ENCODE measurements at regions of chr14 and their contacts with region 1.

Region 1: DNA sequence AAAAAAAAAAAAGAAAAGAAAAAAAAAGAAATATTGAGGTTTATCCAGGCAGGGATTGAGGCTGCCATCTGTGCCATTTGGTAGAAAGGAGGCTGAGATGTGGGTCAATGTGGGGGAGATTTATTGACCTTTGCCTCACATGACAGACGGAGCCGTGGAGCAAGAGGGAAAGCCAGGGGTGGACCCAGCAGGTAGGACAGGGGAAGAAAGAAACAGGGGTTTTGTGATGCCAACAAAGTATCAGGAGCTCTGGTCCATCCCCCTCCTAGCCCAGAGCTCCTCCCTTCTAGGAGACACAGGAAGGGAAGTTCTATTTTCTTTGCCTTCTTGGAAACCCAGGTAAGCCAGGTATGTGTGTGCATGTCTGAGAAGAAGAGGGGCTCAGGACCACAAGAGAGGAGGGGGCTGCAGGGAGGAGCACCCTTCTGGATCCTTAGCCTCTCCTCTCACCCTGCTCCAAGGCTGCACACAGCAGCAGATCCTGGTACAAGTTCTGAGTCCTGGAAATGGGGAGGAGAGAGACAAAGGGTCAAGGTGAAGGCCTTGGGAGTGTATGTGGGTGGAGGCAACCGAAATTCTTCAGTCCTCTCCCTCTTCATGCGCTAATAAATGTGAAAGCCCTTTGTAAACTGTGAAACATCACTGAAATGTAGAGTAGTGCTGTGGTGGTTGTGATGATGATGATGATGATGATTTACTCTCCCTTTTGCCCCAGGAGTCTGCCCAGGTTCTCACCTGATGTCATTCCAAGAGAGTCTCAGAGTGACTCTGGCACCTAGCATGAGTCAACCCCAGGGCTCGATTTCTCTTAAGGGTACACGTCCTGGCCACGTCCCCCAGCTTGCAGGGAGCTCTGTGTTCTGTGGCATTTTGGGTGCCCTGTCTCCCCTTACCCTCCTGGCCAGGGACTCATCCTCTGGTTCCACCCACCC is 26.3 kb downstream of the ZFP36L1 start:
- DNase-seq: no peak
- H3K4me3 ChIP-seq: no peak overlapping the region
- H3K27ac ChIP-seq: no peak overlapping the region
- H3K4me1 ChIP-seq: peaks cover 5 to 10% of the 10 kb centered on the region in 2 donors
- H3K27me3 ChIP-seq: no peaks in the 10 kb centered on the region
- CTCF ChIP-seq: no peak

Region 2: DNA sequence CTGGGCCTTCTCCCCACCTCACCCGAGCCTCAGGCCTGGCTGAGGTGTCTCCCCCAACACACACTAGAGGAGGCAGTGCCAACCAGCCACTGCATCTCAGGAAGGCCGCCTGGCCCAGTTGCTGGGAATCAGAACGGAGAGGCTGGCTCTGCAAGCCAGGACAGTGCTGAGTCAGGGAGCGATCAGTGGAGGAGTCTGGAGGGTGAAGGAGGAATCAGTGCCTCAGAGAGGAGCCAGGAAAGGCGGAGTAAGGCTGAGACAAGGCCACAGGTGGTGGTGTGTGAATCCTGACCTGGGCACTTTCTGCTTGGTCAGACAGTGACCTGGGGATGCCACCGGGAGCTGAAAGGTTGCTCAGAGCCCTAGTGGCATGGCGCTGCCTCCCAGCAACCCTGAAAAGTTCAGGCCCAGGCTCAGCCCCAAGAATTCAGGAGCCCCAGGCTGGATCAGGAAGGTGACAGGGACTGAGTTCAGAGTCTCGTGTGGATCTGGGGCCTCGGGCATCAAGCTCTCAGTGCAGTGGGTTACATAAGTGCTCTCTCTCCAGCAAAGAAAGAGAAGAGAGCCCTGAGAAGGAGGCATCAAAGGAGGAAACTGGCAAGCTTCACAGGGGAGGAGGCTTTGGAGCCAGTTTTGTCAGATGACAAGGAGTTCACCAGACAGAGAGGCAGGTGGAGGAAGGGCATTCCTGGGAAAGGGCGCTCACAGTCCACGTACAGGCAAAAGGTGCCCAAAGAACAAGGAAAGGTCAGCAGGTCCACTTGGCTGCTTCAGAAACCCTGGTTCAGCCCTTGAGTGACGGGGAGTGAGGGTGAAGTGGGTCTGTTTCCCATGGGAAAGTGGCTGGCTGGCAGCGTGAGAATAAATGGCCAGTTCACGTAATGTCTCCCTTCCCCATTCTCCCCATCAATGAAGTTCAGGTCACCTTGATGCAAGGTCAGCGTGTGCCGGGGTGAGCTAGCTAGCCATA is 61.5 kb before region 1 on chr14:
- intact Hi-C with region 1: loop called (anchors 5 kb)
- DNase-seq: no peak
- H3K4me3 ChIP-seq: no peak overlapping the region
- H3K27ac ChIP-seq: no peak overlapping the region
- H3K4me1 ChIP-seq: no peaks in the 10 kb centered on the region
- H3K27me3 ChIP-seq: no peaks in the 10 kb centered on the region
- CTCF ChIP-seq: no peak

Region 3: DNA sequence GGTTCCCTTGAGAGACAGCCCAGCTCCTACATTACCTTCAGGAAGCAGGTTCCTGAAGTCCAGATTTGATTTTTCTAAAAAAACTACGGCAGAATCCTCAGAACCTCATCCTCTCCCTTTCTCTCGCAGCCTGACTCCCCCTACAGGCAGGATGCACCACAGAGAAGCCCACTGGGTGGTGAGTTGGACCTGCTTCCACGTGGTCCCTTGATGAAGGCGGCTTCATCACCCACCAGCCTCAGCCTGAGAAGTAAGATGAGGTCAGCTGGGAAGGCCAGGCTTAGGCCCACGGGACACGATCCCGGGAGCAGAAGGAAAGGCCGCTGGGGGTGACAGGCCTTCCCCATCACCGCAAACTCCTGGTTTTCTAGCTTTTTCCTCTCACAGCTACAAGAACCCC is 129.6 kb after region 1 on chr14:
- intact Hi-C with region 1: no loop called
- DNase-seq: no peak
- H3K4me3 ChIP-seq: no peak overlapping the region
- H3K27ac ChIP-seq: peak overlapping the region; percentile 81 to 87
- H3K4me1 ChIP-seq: peaks cover 6 to 55% of the 10 kb centered on the region in 2 donors
- H3K27me3 ChIP-seq: no peaks in the 10 kb centered on the region
- CTCF ChIP-seq: peak in 2 of 3 experiments; percentile 26 to 34